Activated CD8-positive, alpha-beta T cell treated with anti-CD3 and anti-CD28 coated beads for 36 hours (primary cell): ENCODE measurements at regions of chr14 and their contacts with region 1.

Region 1: DNA sequence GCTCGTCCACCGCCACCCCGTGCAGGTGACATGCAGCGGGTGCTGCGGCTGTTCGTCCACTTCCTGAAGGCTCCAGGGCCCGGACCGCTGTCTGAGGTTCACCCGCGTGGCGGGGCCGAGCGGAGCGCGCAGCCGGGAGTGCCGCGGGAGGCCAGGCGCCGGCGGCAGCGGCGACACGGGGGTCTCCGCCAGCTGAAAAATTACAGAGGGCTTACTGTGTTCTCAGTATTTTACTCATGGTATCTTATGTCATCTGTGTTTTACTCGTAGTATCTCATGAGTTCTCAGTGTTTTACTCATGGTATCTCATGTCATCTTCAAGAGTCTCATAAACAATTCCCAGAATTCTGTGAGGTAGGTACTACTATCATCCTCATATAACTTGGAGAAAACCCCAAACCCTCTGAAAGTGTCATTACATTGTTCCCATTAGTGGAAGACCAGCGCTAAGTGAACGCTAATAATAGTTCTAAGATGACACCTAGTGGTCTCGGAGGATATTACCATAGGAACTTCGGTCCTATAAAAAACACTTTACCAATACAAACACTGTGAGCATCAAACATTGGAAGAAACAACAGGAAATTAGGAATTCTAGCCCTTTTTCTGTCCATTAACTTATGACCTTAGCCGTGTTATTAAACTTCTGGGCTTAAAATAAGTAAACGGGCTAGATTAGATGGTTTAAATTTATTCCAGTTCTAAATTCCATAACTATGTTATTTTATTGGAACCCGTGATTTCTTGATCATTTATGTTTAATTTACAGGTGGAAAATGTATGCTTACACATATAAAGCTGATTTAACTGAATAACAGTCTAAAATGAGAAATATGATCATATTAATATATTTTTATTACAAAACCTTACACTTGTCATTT is 32.4 kb downstream of the AK7 start:
- DNase-seq: peak; percentile 41
- ATAC-seq: peak; percentile 89
- H3K4me3 Mint-ChIP-seq: peak overlapping the region; percentile 68
- H3K27ac Mint-ChIP-seq: no peak overlapping the region
- H3K4me1 Mint-ChIP-seq: no peaks in the 10 kb centered on the region
- H3K27me3 Mint-ChIP-seq: peaks cover 9% of the 10 kb centered on the region
- CTCF ChIP-seq: peak; percentile 93

Region 2: DNA sequence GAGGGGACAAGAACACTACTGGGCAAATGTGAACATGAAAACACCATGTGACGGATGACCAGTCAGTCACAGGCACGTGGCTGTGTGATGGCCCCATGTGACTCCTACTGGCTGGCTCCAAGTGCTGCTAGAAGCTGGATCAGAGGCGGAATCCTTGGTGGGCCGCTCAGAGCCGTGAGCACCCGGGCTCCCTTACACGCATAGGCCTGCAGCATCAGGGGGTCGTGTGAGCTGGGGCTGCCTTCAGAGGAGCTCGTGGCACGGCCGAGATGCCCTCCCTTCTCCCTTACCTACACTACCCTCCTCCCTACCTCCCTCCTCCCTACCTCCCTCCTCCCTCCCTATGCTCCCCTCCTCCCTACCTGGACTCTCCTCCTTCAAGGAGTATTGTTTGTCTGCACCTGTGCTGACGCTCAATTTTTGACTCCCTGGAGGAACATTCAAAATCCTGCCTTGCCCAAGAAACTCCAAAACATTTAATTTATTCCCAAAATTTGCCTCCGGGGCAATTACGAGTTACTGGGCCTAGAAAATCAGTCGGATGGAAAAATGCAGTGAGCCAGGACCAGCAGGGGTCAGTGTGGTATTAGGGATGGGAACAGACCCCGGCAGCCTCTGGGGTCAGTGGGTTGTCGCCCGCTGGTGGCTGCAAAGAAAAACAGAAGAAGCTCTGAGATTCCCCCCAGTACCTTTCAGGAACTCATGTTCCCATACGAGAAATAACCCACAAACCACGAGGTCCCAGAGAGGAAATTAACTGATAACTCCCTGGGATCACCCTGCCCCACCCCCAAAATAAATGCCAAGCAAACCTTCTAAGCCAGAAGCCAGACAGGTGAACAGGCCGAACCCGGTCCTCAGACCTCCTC is 324.0 kb before region 1 on chr14:
- CTCF ChIA-PET with region 1: interaction called, 4 read pairs
- POLR2A ChIA-PET with region 1: no interaction called
- intact Hi-C with region 1: loop called (anchors 10 kb)
- DNase-seq: peak; percentile 82
- ATAC-seq: peak; percentile 72
- H3K4me3 Mint-ChIP-seq: no peak overlapping the region
- H3K27ac Mint-ChIP-seq: no peak overlapping the region
- H3K4me1 Mint-ChIP-seq: no peaks in the 10 kb centered on the region
- H3K27me3 Mint-ChIP-seq: peaks cover 5% of the 10 kb centered on the region
- CTCF ChIP-seq: peak; percentile 73